Tibial artery (tissue), 4 donors: ENCODE measurements at regions of chr6 and their contacts with region 1.

Region 1: GRCh38 chr6:125273965-125274364 is 27.8 kb downstream of the HDDC2 start:
- DNase-seq: peak in 1 of 2 donors; percentile 60
- H3K4me3 ChIP-seq: no peak overlapping the region
- H3K27ac ChIP-seq: no peak overlapping the region
- H3K4me1 ChIP-seq: no peaks in the 10 kb centered on the region
- H3K27me3 ChIP-seq: no peaks in the 10 kb centered on the region
- CTCF ChIP-seq: no peak

Region 2: GRCh38 chr6:124073021-124073420 is 1200.9 kb before region 1 on chr6:
- intact Hi-C with region 1: loop called (anchors 5 kb)
- DNase-seq: no peak
- H3K4me3 ChIP-seq: no peak overlapping the region
- H3K27ac ChIP-seq: no peak overlapping the region
- H3K4me1 ChIP-seq: no peaks in the 10 kb centered on the region
- H3K27me3 ChIP-seq: no peaks in the 10 kb centered on the region
- CTCF ChIP-seq: no peak